Gastrocnemius medialis (tissue), 4 donors: ENCODE measurements at regions of chr13 and their contacts with region 1.

Region 1: DNA sequence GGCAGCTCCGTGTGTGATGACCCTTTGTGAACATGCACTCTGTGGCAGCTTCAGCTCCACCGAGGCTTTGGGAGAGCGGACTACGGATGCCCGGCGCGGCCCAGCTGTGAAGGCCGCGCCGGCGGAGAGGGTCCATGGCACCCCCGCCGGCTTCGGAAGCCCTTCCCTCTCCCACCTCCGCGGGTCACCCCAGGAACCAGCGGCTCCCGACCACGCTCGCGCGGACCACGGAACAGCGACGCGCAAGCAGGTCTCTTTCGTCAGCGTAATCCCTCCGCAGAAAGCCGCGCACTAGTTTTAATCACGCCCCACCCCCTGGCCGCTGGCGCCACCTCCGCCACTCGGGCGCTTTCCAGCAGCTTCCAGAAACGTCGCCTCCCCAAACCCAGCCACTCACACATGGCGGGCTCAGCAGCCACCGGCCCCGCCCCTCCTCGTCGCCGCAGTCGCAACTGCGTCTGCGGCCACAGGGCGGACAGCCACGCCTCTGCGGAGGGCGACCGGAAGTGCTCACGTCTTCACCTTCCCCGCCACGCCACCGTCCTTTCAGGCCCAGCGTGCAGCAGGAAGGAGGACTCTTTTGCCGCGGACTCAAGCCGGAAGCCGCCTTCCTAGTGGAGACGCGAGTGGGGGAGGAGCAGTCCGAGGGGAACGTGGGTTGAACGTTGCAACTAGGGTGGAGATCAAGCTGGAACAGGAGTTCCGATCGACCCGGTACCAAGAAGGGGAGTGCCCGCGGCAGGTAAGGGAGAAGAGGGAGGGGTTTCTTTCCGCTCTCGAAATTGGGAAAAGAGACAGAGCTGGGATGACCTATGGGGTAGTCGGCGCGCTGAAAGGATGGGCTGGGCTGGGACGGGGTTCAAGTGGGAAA is at the start of gene USPL1:
- DNase-seq: peak; percentile 96 to 98
- ATAC-seq: peak; percentile 84 to 87
- H3K4me3 ChIP-seq: peak within 1 kb of the TSS; percentile 81 to 91 (median 86)
- H3K27ac ChIP-seq: peak within 1 kb of the TSS; percentile 91 to 100 (median 98)
- H3K4me1 ChIP-seq: peaks cover 33 to 40% of the 10 kb centered on the region in 2 donors
- H3K27me3 ChIP-seq: no peaks in the 10 kb centered on the region
- CTCF ChIP-seq: peak; percentile 34 to 63 (median 51)
- POLR2A ChIP-seq: peak; percentile 93 to 96
- total RNA-seq, gene USPL1: 14.2 to 18.4 (median 15.6) TPM

Region 2: GRCh38 chr13:30306762-30307193 is 310.8 kb before region 1 on chr13:
- in situ Hi-C with region 1: no loop called
- intact Hi-C with region 1: loop called (anchors 1 kb)
- DNase-seq: peak; percentile 86 to 88
- ATAC-seq: peak; percentile 98 to 99
- H3K4me3 ChIP-seq: peak overlapping the region; percentile 85 to 98 (median 91)
- H3K27ac ChIP-seq: peak overlapping the region; percentile 87 to 96 (median 90)
- H3K4me1 ChIP-seq: peaks cover 15 to 16% of the 10 kb centered on the region in 2 donors
- H3K27me3 ChIP-seq: no peaks in the 10 kb centered on the region
- CTCF ChIP-seq: no peak
- POLR2A ChIP-seq: no peak

Region 3: GRCh38 chr13:30408319-30409101 is 209.0 kb before region 1 on chr13:
- in situ Hi-C with region 1: loop called in 2 of 4 experiments (anchors 10 kb)
- intact Hi-C with region 1: loop called (anchors 1 kb)
- DNase-seq: peak; percentile 91 to 95
- ATAC-seq: peak; percentile 93 to 96
- H3K4me3 ChIP-seq: peak overlapping the region; percentile 48 to 59 (median 52)
- H3K27ac ChIP-seq: peak overlapping the region; percentile 84 to 91 (median 88)
- H3K4me1 ChIP-seq: peaks cover 5 to 15% of the 10 kb centered on the region in 2 donors
- H3K27me3 ChIP-seq: no peaks in the 10 kb centered on the region
- CTCF ChIP-seq: peak; percentile 73 to 94 (median 86)
- POLR2A ChIP-seq: peak in 1 of 2 donors; percentile 12

Region 4: DNA sequence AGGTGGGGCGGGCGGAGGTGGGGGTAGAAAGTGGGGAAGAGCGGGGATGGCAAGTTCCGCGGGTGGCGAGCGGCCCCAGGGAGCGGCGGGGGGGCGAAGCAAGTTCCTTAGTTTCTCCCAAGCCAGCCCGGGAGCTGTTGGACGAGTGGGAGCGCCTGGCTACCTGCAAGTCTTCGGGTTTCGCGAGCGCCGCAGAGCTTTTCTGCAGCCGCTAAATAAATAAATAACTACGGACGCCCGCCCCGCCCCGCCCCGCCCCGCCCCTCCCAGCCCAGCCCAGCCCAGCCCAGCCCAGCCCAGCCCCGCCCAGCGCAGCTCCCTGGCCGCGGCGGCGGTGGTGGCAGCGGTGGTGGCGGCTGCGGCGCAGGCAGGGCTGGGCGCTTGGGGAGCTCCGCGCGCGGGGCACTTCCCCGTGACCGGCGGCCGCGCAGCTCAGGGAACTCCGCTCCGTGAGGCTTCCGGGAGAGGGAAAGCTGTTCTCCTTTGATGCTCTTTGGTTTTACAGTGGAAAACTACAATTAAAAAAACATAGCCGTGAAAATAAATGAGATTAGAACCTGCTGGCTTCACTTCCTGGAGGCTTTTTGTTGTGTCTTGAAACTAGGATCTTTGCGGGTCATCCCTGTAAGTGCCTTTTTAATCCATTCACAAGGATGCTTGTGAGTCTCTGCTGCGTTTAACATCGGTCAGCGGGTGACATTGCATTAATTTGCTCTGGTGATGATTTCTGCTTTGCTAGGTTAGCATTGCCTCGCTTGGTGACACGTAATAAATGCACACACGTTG is 195.3 kb before region 1 on chr13 and contains the start of gene UBE2L5:
- in situ Hi-C with region 1: no loop called
- intact Hi-C with region 1: loop called (anchors 5 kb)
- DNase-seq: peak; percentile 65 to 76
- ATAC-seq: peak; percentile 64 to 69
- H3K4me3 ChIP-seq: peak within 1 kb of the TSS; percentile 64 to 95 (median 77)
- H3K27ac ChIP-seq: peak within 1 kb of the TSS; percentile 95 to 99 (median 98)
- H3K4me1 ChIP-seq: peaks cover 9 to 10% of the 10 kb centered on the region in 2 donors
- H3K27me3 ChIP-seq: no peaks in the 10 kb centered on the region
- CTCF ChIP-seq: no peak
- POLR2A ChIP-seq: peak; percentile 70 to 77
- total RNA-seq, gene UBE2L5: not detected

Region 5: GRCh38 chr13:30535046-30535445 is 82.5 kb before region 1 on chr13:
- in situ Hi-C with region 1: no loop called
- intact Hi-C with region 1: no loop called
- DNase-seq: no peak
- ATAC-seq: no peak
- H3K4me3 ChIP-seq: no peak overlapping the region
- H3K27ac ChIP-seq: no peak overlapping the region
- H3K4me1 ChIP-seq: no peaks in the 10 kb centered on the region
- H3K27me3 ChIP-seq: no peaks in the 10 kb centered on the region
- CTCF ChIP-seq: no peak
- POLR2A ChIP-seq: no peak

Region 6: GRCh38 chr13:30673669-30674521 is 56.3 kb after region 1 on chr13:
- in situ Hi-C with region 1: no loop called
- intact Hi-C with region 1: loop called (anchors 1 kb)
- DNase-seq: peak; percentile 61 to 83
- ATAC-seq: peak; percentile 79 to 86
- H3K4me3 ChIP-seq: peak overlapping the region; percentile 53 to 63 (median 56)
- H3K27ac ChIP-seq: peak overlapping the region; percentile 72 to 79 (median 74)
- H3K4me1 ChIP-seq: peaks cover 4 to 5% of the 10 kb centered on the region in 2 donors
- H3K27me3 ChIP-seq: no peaks in the 10 kb centered on the region
- CTCF ChIP-seq: peak; percentile 62 to 80 (median 70)
- POLR2A ChIP-seq: no peak

Region 7: DNA sequence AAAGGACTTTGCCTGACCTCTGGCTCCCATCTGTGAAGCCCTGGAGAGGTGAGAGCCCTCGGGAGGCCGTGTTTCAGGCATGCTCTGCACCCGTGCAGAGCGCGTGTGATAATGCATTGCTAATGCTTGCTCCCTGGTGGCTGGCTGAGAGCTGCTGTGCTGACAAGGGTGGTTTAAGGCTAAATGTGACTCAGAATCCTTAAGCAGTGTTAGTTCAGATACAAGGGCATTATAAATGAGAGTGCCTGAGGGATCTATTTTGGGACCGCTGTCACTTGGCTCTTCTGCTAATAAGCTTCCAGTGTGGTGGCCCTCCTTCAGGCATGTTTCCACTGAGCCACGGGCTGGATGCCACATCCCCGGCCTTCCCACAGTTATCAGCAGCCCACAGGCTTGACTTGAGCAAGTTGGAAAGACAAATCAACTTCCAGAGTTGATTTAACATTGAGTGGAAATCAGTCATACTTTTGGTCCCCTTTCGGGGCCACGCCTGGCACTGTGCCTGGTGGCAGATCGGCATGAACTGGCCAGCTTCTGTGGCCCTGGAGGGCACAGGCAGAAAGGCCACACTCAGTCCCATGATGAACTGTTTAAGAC is 134.7 kb after region 1 on chr13:
- in situ Hi-C with region 1: no loop called
- intact Hi-C with region 1: loop called (anchors 1 kb)
- DNase-seq: peak; percentile 56 to 74
- ATAC-seq: peak; percentile 96 to 97
- H3K4me3 ChIP-seq: no peak overlapping the region
- H3K27ac ChIP-seq: peak overlapping the region; percentile 83 to 91 (median 87)
- H3K4me1 ChIP-seq: peaks cover 34 to 45% of the 10 kb centered on the region in 2 donors
- H3K27me3 ChIP-seq: no peaks in the 10 kb centered on the region
- CTCF ChIP-seq: no peak
- POLR2A ChIP-seq: no peak

Region 8: DNA sequence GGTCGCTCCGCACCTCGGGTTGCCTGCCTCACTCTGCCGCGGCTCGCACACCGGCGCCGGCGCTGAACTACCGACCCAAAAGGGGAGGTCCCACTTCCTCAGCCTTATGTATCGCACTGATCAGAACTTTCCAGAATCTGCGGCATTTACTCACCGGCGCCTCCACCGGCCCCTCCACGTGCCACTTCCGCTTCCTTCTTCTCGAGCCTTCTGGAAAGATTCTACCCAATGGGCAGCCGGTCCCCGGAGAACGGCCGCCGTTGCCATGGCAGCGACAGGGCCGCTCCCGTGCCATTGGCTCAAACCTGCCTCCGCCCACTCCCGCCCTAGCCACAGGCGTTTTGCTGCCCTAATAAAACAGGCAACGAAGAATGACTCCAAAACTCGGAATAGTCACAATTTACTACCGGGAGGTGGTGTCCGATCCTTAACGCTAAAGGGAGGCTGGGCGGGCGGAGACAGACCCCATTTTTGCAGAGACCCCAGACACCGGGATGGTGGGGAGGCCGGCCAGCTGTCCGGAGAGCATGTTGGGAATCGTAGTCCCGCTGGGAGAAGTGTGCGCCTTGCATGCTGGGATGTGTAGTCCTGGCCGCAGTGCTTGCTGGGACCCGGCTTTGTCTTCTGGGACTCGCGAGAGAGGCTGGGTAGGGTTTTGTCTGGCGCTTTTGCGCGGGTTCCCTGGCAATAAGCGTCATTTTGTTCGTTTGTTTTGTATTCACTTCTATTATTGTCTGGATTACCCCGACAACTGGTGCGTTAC is 544.5 kb after region 1 on chr13 and contains the start of gene HSPH1:
- in situ Hi-C with region 1: loop called in 1 of 4 experiments (anchors 25 kb)
- intact Hi-C with region 1: loop called (anchors 5 kb)
- DNase-seq: peak; percentile 97 to 98
- ATAC-seq: peak; percentile 95 to 96
- H3K4me3 ChIP-seq: peak within 1 kb of the TSS; percentile 82 to 95 (median 93)
- H3K27ac ChIP-seq: peak within 1 kb of the TSS; percentile 84 to 98 (median 96)
- H3K4me1 ChIP-seq: peaks cover 31 to 42% of the 10 kb centered on the region in 2 donors
- H3K27me3 ChIP-seq: no peaks in the 10 kb centered on the region
- CTCF ChIP-seq: peak in 1 of 5 experiments; percentile 28
- POLR2A ChIP-seq: peak; percentile 74 to 93
- total RNA-seq, gene HSPH1: 23.0 to 57.7 (median 30.6) TPM